H1 (cell line): ENCODE measurements at regions of chr3 and their contacts with region 1.

Region 1: DNA sequence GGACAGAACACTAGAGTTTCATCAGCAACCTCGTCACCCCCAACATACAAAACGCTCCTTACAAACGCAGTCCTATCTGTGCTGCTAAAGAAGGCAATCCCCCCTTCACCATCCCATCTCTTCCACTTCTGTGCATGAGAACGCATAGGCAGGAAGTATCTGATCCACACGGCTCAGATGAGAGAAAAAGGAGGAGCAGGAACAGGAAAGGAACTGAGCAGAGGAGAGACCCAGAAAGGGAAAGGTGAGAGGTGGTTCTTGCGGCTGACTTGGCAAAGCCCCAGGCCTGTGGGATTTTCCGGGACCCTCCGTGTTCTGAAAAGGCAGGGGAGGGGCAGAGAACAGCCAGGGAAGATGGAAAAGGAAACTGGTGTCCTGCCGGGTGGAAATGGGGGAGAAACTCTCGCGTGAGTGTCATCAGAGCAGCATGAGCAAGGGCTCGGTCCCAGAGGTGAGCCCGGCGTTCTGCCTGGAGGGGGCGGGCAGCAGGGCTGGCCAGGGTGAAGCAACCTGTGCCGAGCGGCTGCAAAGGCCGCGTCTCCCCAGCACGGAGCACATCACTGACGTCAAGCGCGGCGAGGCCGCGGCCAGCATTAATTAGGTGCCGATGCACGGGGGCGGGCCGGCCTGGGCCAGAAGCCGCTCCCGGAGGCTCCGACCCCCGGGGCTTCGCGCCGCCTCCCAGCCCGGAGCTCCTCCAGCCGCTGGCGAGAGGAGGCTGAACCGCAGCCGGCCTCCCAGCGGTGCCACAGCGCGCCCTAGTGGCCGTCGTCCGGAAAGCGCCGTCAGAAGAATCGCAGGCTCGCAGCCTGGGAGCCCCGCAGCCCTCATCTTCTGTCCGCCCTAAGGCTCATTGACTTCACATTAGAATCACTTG is 35.8 kb downstream of the CPN2 start:
- DNase-seq: peak; percentile 77 to 98
- H3K4me3 ChIP-seq: peak overlapping the region in 3 of 4 experiments; percentile 8 to 55 (median 23); a peak in 5 of 8 replicates
- H3K27ac ChIP-seq: no peak overlapping the region
- H3K4me1 ChIP-seq: peaks cover 6 to 23% (median 13%) of the 10 kb centered on the region in 4 experiments
- H3K27me3 ChIP-seq: peaks cover 0 to 27% (median 12%) of the 10 kb centered on the region in 4 experiments; a peak in 5 of 7 replicates
- CTCF ChIP-seq: peak; percentile 83 to 95 (median 89)
- EP300 ChIP-seq: peak in 1 of 2 experiments; percentile 48; a peak in 1 of 3 replicates
- POLR2A ChIP-seq: no peak
- RAD21 ChIP-seq: peak; percentile 98 to 99

Region 2: GRCh38 chr3:194141415-194142155 is 173.7 kb before region 1 on chr3:
- CTCF ChIA-PET with region 1: interaction called, 23 read pairs
- POLR2A ChIA-PET with region 1: interaction called, 10 read pairs
- DNase-seq: peak in 1 of 2 experiments; percentile 82
- H3K4me3 ChIP-seq: peak overlapping the region in 3 of 4 experiments; percentile 14 to 39 (median 26); a peak in 4 of 8 replicates
- H3K27ac ChIP-seq: peak overlapping the region; percentile 66; the same call in 1 of the 2 replicates
- H3K4me1 ChIP-seq: peaks cover 11 to 33% (median 20%) of the 10 kb centered on the region in 4 experiments
- H3K27me3 ChIP-seq: peaks cover 0 to 13% (median 7%) of the 10 kb centered on the region in 4 experiments; a peak in 3 of 7 replicates
- CTCF ChIP-seq: no peak; a peak in 1 of 4 replicates
- EP300 ChIP-seq: 0 out of 3 replicates have a peak, but pooled peaks of 1 of the 2 experiments have one; percentile 44
- POLR2A ChIP-seq: no peak; a peak in 1 of 3 replicates
- RAD21 ChIP-seq: peak in 1 of 2 experiments; percentile 35; a peak in 2 of 4 replicates

Region 3: DNA sequence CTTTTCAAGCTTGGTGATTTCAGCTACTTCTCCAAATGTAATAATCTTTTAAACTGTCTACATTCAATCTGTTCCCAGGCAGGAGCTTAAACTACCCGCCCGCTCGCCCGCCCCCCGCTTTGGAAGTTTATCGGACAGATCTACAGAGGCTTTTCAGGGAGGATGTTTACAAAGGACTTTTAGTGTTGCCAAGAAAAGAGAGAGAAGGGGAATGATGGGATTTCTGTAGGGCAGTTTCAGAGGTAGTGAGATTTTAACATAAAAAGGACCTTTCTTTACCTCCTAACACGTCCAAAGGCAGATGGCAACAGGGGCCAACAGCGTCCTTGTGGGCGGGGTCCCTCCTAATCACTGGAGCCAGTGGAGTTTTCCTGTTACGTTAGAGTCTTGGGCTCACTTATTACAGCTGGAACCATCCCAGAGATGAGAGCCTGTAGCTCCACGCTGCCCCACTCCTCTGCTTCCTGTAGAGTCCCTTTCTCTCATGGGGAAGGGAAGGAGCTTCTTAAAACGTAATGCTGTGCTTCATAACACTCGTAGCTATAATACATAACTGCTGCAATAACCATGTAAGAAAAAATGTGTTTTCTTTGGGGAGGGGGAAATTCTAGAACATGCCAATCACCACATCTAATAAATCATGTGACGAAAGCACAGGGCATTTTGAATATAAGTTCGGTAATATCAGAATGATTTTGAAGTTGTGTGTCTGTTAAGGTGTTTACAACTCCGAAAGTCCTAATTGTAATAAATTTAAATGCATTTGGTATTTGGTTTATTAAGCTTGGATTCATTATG is 148.4 kb before region 1 on chr3:
- CTCF ChIA-PET with region 1: interaction called, 24 read pairs
- POLR2A ChIA-PET with region 1: no interaction called
- DNase-seq: no peak
- H3K4me3 ChIP-seq: no peak overlapping the region
- H3K27ac ChIP-seq: no peak overlapping the region
- H3K4me1 ChIP-seq: peaks cover 0 to 16% (median 4%) of the 10 kb centered on the region in 4 experiments; a peak in 4 of 7 replicates
- H3K27me3 ChIP-seq: no peaks in the 10 kb centered on the region; a peak in 1 of 7 replicates
- CTCF ChIP-seq: no peak
- EP300 ChIP-seq: no peak
- POLR2A ChIP-seq: no peak
- RAD21 ChIP-seq: no peak

Region 4: GRCh38 chr3:194218646-194219453 is 96.5 kb before region 1 on chr3:
- CTCF ChIA-PET with region 1: no interaction called
- POLR2A ChIA-PET with region 1: no interaction called
- DNase-seq: no peak
- H3K4me3 ChIP-seq: no peak overlapping the region
- H3K27ac ChIP-seq: no peak overlapping the region
- H3K4me1 ChIP-seq: peaks cover 0 to 5% (median 1%) of the 10 kb centered on the region in 4 experiments; a peak in 2 of 7 replicates
- H3K27me3 ChIP-seq: no peaks in the 10 kb centered on the region
- CTCF ChIP-seq: no peak
- EP300 ChIP-seq: no peak
- POLR2A ChIP-seq: no peak
- RAD21 ChIP-seq: no peak

Region 5: DNA sequence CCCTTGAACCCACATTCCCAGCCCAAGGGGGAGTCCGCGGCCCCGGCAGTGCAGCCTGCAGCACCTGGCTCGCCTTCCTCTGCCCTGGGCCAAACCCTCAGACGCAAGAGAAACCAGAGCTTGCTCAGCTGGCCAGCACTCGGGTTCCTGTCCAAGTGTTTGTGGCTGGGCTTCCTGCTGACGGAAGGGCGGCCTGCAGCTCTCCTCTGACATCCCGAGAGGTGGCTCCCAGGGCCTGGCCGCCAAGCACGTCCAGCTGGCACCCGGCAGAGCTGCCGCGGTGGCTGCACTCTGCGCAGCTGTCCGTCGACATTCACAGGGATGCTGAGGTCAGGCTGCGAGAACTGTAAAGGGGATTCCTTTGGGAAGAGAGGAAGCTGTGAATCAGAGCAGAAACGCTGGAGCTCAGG is 49.8 kb before region 1 on chr3:
- CTCF ChIA-PET with region 1: interaction called, 79 read pairs
- POLR2A ChIA-PET with region 1: interaction called, 3 read pairs
- DNase-seq: no peak
- H3K4me3 ChIP-seq: no peak overlapping the region
- H3K27ac ChIP-seq: no peak overlapping the region
- H3K4me1 ChIP-seq: peaks cover 0 to 9% (median 4%) of the 10 kb centered on the region in 4 experiments; a peak in 5 of 7 replicates
- H3K27me3 ChIP-seq: peaks cover 0 to 4% (median 1%) of the 10 kb centered on the region in 4 experiments; a peak in 2 of 7 replicates
- CTCF ChIP-seq: no peak
- EP300 ChIP-seq: no peak
- POLR2A ChIP-seq: no peak
- RAD21 ChIP-seq: no peak

Region 6: DNA sequence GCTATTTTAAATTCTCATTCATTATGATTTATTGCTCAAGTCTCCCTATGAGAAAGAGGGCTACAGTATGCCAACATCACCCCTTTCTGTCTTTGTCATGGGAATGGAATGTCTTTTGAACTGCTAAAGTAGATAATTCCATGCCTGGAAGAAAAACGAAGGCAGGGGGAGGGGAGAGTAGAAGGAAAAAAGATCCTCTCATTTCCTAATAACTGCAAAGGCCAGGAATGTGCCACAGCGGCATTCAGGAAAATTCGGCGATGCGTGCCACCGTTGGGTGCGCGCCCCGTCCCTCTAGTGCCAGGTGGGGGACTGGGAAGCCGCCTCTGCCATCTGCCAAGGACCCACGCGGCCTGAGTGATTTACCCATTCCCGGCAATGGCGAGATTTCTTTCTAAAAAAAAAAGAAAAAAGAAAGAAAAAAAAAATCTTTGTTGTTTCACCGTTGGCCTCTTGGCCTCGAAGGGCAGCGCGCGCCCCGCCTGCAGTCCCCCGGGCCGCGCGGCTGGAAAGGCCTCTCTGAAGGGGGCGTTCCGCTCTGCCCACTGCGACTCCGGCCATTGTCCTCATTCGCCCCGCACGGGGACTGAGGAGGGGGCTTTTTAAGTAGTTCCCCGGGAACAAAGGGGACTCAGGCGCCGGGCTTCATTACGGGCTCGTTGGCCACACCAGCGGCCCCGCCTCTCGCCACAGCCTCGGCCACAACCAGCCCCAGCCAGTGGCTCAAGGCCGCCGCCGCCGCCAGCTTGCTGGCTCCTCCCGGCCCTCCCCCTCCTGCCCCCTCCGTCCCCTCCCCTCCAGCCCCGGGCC is 18.7 kb before region 1 on chr3:
- CTCF ChIA-PET with region 1: interaction called, 30 read pairs
- POLR2A ChIA-PET with region 1: interaction called, 28 read pairs
- DNase-seq: peak in 1 of 2 experiments; percentile 88
- H3K4me3 ChIP-seq: peak overlapping the region; percentile 22 to 55 (median 26); a peak in 6 of 8 replicates
- H3K27ac ChIP-seq: peak overlapping the region; percentile 82
- H3K4me1 ChIP-seq: peaks cover 17 to 33% (median 22%) of the 10 kb centered on the region in 4 experiments
- H3K27me3 ChIP-seq: peaks cover 0 to 3% (median 0%) of the 10 kb centered on the region in 4 experiments; a peak in 1 of 7 replicates
- CTCF ChIP-seq: no peak
- EP300 ChIP-seq: no peak; a peak in 1 of 3 replicates
- POLR2A ChIP-seq: peak; percentile 21 to 59
- RAD21 ChIP-seq: no peak

Region 7: GRCh38 chr3:194447161-194447560 is 131.8 kb after region 1 on chr3:
- CTCF ChIA-PET with region 1: no interaction called
- POLR2A ChIA-PET with region 1: no interaction called
- DNase-seq: no peak
- H3K4me3 ChIP-seq: no peak overlapping the region
- H3K27ac ChIP-seq: no peak overlapping the region
- H3K4me1 ChIP-seq: no peaks in the 10 kb centered on the region
- H3K27me3 ChIP-seq: peaks cover 0 to 2% (median 0%) of the 10 kb centered on the region in 4 experiments; a peak in 1 of 7 replicates
- CTCF ChIP-seq: no peak
- EP300 ChIP-seq: no peak
- POLR2A ChIP-seq: no peak
- RAD21 ChIP-seq: no peak